ENCODE measurements at regions of chr6 and their contacts with region 1.

Region 1: GRCh38 chr6:166627033-166627874 is at the start of gene RPS6KA2:
- DNase-seq: peak; percentile 100
- H3K4me3 Mint-ChIP-seq: peak within 1 kb of the TSS; percentile 87
- H3K27ac Mint-ChIP-seq: peak within 1 kb of the TSS; percentile 58
- H3K4me1 Mint-ChIP-seq: peaks cover 12% of the 10 kb centered on the region
- H3K27me3 Mint-ChIP-seq: peaks cover 25% of the 10 kb centered on the region
- total RNA-seq, gene RPS6KA2: 7.7 to 7.9 TPM

Region 2: GRCh38 chr6:166308033-166308768 is 319.1 kb before region 1 on chr6 and contains the start of gene PRR18:
- CTCF ChIA-PET with region 1: interaction called, 3 read pairs
- POLR2A ChIA-PET with region 1: no interaction called
- intact Hi-C with region 1: loop called (anchors 10 kb)
- DNase-seq: no peak
- H3K4me3 Mint-ChIP-seq: peak within 1 kb of the TSS; percentile 48
- H3K27ac Mint-ChIP-seq: no peak within 1 kb of the TSS
- H3K4me1 Mint-ChIP-seq: no peaks in the 10 kb centered on the region
- H3K27me3 Mint-ChIP-seq: peaks cover 38% of the 10 kb centered on the region
- total RNA-seq, gene PRR18: 0.17 TPM in 1 of 2 experiments, not detected in the other

Region 3: GRCh38 chr6:166382933-166383801 is 244.1 kb before region 1 on chr6 and contains the start of gene MPC1:
- CTCF ChIA-PET with region 1: interaction called, 5 read pairs
- POLR2A ChIA-PET with region 1: no interaction called
- intact Hi-C with region 1: loop called (anchors 1 kb)
- DNase-seq: peak; percentile 96
- H3K4me3 Mint-ChIP-seq: peak within 1 kb of the TSS; percentile 87
- H3K27ac Mint-ChIP-seq: peak within 1 kb of the TSS; percentile 74
- H3K4me1 Mint-ChIP-seq: peaks cover 7% of the 10 kb centered on the region
- H3K27me3 Mint-ChIP-seq: no peaks in the 10 kb centered on the region
- total RNA-seq, gene MPC1: 22.5 to 22.9 TPM

Region 4: DNA sequence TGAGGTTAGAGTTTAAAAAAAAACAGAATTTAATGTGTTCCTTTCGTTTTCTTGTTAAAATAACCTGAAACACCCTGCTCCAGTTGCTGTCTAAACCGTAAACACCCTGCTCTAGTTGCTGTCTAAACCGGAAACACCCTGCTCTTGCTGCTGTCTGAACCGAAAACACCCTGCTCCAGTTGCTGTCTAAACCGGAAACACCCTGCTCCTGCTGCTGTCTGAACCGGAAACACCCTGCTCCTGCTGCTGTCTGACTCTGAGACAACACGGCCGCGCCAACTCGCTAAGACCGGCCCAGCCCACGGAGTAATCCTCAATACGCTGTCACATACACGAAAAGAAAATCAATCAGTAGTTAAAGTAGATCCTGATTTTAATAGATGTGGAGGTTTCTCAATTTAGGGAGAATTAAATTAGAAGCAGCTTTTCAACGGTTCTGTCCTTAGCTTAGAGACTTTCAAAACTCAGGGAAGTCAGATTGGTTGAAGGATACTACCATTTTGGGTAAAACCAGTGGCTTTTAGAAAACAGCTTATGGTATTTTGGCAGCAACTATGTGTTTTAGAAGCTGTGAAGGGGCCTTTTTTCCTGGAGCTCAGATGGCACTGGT is 139.1 kb before region 1 on chr6:
- CTCF ChIA-PET with region 1: no interaction called
- POLR2A ChIA-PET with region 1: interaction called, 5 read pairs
- intact Hi-C with region 1: loop called (anchors 2 kb)
- DNase-seq: peak; percentile 86
- H3K4me3 Mint-ChIP-seq: peak overlapping the region; percentile 71
- H3K27ac Mint-ChIP-seq: peak overlapping the region; percentile 97
- H3K4me1 Mint-ChIP-seq: peaks cover 20% of the 10 kb centered on the region
- H3K27me3 Mint-ChIP-seq: no peaks in the 10 kb centered on the region

Region 5: DNA sequence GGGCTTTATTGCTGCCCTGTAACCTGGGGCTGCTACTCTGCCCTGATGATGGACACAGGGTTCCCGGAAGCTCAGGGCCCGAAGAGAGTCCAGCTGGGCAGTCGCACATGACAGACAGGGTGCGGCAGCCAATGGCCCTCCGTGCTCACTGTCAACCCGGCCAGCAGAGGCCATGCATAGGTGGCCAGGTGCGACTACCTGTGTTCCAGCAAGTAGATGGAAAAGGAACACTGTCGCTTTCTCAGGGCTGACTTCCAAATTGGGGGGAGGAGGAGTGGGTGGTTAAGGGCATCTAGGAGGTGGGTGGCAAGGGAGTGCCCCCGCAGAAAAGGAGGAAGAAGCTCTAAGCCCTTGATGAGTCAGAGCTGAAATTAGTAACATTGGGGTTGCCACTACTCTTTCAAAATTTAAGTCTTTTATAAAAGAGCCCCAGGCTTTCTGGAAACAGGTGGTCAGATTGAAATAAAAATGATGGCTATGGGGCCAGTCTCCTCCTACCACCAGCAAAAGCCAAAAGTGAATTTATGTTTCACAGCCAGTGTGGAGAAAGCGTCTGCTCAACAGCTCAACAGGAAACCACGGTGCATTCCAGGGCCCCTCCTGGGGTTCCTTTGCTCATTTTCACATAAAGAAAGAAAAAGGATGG is 38.4 kb before region 1 on chr6:
- CTCF ChIA-PET with region 1: no interaction called
- POLR2A ChIA-PET with region 1: no interaction called
- intact Hi-C with region 1: loop called (anchors 2 kb)
- DNase-seq: no peak
- H3K4me3 Mint-ChIP-seq: no peak overlapping the region
- H3K27ac Mint-ChIP-seq: no peak overlapping the region
- H3K4me1 Mint-ChIP-seq: peaks cover 14% of the 10 kb centered on the region
- H3K27me3 Mint-ChIP-seq: no peaks in the 10 kb centered on the region

Region 6: DNA sequence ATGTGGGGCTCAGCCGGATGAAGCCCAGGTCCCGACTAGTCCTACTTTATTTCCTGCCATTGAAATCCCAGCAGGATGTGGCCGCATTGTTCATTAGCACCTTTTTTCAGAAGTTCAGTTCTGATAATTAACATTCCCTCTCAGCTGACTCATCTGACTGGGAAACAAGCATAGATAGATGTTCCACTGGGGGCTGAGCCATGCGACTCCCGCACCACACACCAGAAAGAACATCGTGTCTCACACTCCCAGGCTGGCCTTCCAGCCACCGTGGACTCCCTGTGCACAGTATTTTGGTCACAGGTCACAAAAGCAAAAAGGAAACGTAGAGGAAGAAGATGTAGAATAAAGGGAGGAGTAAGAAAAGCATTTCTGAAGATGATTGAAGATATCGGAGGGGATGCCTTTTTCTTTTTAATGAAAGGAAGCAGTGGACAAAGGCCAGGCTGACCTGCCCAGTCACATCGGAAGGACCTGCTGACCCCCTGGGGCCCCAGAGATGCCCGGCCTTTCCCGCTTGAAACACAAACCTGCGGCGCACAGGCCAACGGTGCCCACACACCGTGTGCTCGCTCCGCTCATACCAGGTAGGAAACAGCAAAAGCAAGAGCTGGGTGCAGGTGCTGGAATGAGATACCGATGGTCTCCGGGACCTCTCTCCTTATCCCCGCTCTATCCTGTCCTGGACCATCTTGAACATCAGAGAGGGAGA is 12.0 kb before region 1 on chr6:
- CTCF ChIA-PET with region 1: no interaction called
- POLR2A ChIA-PET with region 1: no interaction called
- intact Hi-C with region 1: no loop called
- DNase-seq: no peak
- H3K4me3 Mint-ChIP-seq: no peak overlapping the region
- H3K27ac Mint-ChIP-seq: no peak overlapping the region
- H3K4me1 Mint-ChIP-seq: no peaks in the 10 kb centered on the region
- H3K27me3 Mint-ChIP-seq: no peaks in the 10 kb centered on the region

Region 7: GRCh38 chr6:166655713-166656229 is 28.5 kb after region 1 on chr6:
- CTCF ChIA-PET with region 1: no interaction called
- POLR2A ChIA-PET with region 1: no interaction called
- intact Hi-C with region 1: no loop called
- DNase-seq: no peak
- H3K4me3 Mint-ChIP-seq: no peak overlapping the region
- H3K27ac Mint-ChIP-seq: no peak overlapping the region
- H3K4me1 Mint-ChIP-seq: peaks cover 9% of the 10 kb centered on the region
- H3K27me3 Mint-ChIP-seq: peaks cover 16% of the 10 kb centered on the region

Region 8: GRCh38 chr6:166999145-166999883 is 372.1 kb after region 1 on chr6 and contains the start of gene CEP43:
- CTCF ChIA-PET with region 1: no interaction called
- POLR2A ChIA-PET with region 1: no interaction called
- intact Hi-C with region 1: loop called (anchors 1 kb)
- DNase-seq: peak; percentile 90
- H3K4me3 Mint-ChIP-seq: peak within 1 kb of the TSS; percentile 85
- H3K27ac Mint-ChIP-seq: peak within 1 kb of the TSS; percentile 85
- H3K4me1 Mint-ChIP-seq: peaks cover 28% of the 10 kb centered on the region
- H3K27me3 Mint-ChIP-seq: no peaks in the 10 kb centered on the region
- total RNA-seq, gene CEP43: 19.5 to 21.3 TPM

Measured in activated CD4-positive, alpha-beta memory T cell treated with anti-CD3 and anti-CD28 coated beads for 36 hours (primary cell).